ENCODE measurements at regions of chr16 and their contacts with region 1.

Region 1: DNA sequence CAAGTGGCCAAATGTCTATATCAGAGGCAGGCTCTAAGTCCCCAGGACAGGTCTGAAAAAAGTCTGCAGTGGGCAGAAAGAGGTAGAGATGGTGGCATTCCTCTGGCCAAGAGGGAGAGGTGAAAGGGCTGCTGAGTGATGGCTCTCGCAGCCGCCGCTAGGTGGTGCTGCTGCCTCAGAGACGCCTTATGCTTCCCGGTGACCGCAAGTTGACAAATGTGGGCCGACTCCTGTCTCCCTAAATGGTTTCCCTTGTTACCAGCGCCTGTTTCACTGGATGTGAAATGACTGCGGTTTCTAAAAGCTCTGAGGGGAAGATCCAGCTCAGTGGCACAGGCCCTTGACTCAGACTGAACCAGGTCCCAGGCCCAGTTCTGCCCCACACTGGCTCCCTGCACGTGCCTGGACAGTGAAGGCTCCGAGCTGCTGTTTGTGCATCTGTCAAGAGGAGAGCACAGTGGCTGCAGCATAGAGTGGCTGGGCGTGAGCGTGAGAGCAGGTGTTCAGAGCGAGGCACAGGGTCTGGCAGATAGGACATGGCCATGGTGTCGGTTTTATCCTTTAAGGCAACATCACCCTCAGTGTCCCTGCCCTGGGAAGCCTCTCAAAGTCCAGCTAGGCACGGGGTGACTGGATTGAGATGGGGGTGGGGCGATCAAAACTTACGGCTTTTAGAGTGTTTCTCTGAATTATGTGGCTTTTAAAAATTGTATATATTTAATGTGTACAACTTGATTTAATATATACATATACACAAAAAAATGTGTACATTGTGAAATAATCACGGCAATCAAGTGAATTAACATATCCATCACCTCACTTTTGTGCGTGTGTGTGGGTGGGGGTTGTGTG is 19.9 kb downstream of the CLEC16A start:
- DNase-seq: peak; percentile 89
- H3K4me3 Mint-ChIP-seq: peak overlapping the region; percentile 36
- H3K27ac Mint-ChIP-seq: peak overlapping the region; percentile 90
- H3K4me1 Mint-ChIP-seq: peaks cover 69% of the 10 kb centered on the region
- H3K27me3 Mint-ChIP-seq: no peaks in the 10 kb centered on the region

Region 2: DNA sequence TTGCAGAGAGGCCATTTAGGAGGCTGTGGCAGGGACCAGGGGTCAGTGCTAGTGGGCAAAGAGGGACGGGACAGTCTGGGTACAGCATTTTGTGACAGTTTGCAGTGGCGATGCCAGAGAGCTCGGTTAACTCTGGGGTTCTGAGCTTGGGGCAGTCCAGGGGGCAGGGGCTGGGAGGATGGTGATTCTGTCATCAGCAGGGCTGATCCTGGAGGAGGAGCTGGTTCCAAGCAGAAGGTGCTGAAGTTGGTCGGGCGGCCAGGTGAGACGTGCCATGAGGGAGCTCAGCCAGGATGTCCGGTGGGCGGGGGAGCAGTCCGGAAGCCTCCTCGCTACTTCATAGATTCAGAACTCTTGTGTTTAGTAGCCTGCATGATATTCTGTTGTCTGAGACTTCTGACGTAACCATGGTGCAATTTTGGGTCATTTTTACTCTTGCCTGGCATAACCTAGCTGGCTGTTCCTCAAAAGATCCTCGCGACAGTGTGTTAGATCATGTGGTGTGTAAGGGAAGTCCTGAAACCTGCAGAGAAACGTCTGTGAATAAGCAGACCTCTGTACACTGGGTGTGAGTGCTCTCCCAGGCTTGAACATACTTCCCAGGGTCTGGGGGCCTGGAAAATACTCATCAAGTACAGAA is 102.1 kb after region 1 on chr16:
- CTCF ChIA-PET with region 1: no interaction called
- DNase-seq: peak; percentile 33
- H3K4me3 Mint-ChIP-seq: no peak overlapping the region
- H3K27ac Mint-ChIP-seq: peak overlapping the region; percentile 17
- H3K4me1 Mint-ChIP-seq: peaks cover 43% of the 10 kb centered on the region
- H3K27me3 Mint-ChIP-seq: no peaks in the 10 kb centered on the region

Region 3: GRCh38 chr16:11094072-11094856 is 130.0 kb after region 1 on chr16:
- CTCF ChIA-PET with region 1: interaction called, 11 read pairs
- DNase-seq: peak; percentile 69
- H3K4me3 Mint-ChIP-seq: peak overlapping the region; percentile 9
- H3K27ac Mint-ChIP-seq: peak overlapping the region; percentile 92
- H3K4me1 Mint-ChIP-seq: peaks cover 80% of the 10 kb centered on the region
- H3K27me3 Mint-ChIP-seq: no peaks in the 10 kb centered on the region

Region 4: GRCh38 chr16:11356573-11357331 is 392.5 kb after region 1 on chr16:
- CTCF ChIA-PET with region 1: interaction called, 20 read pairs
- DNase-seq: peak; percentile 73
- H3K4me3 Mint-ChIP-seq: peak overlapping the region; percentile 62
- H3K27ac Mint-ChIP-seq: peak overlapping the region; percentile 96
- H3K4me1 Mint-ChIP-seq: peaks cover 91% of the 10 kb centered on the region
- H3K27me3 Mint-ChIP-seq: peaks cover 47% of the 10 kb centered on the region

Region 5: DNA sequence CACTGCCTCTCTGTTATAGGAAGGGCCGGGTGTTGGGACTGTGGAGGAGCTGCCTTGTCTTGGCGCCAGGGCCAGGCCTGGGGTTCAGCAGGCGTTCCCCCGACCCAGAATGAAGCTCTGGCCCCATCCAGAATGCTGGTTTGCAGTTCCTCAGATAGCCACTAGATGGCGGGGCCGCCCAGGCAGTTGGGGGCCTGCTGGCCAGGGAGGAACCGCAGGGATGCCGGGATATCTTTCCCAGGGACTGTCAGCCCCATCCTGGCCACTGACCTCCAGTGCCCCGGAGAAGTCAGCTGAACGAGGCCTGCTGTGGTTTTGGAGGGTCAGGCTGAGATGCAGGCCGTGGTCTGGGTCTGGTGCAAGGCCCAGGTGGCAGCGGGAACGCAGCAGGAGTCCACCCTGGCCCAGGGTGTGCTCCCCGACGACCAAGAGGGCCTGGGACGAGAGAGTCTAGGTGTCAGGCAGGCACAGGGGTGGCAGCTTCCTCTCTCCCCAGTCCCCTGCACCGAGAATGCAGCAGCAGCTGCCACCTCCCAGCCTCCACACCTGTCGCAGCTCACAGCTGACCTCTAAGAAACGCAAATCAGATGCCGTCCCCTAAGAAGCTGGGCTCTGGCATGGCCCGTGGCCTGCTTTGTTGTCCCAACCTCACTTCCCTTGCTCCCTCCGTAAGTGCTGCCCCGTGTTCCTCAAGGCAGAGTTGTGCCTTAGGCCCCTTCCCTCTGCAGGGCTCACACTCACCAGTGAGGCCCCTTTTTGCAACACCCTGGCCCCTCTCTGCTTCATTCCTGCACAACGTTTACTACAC is 432.2 kb after region 1 on chr16:
- CTCF ChIA-PET with region 1: interaction called, 13 read pairs
- DNase-seq: peak; percentile 76
- H3K4me3 Mint-ChIP-seq: no peak overlapping the region
- H3K27ac Mint-ChIP-seq: no peak overlapping the region
- H3K4me1 Mint-ChIP-seq: no peaks in the 10 kb centered on the region
- H3K27me3 Mint-ChIP-seq: peaks cover 48% of the 10 kb centered on the region

Region 6: DNA sequence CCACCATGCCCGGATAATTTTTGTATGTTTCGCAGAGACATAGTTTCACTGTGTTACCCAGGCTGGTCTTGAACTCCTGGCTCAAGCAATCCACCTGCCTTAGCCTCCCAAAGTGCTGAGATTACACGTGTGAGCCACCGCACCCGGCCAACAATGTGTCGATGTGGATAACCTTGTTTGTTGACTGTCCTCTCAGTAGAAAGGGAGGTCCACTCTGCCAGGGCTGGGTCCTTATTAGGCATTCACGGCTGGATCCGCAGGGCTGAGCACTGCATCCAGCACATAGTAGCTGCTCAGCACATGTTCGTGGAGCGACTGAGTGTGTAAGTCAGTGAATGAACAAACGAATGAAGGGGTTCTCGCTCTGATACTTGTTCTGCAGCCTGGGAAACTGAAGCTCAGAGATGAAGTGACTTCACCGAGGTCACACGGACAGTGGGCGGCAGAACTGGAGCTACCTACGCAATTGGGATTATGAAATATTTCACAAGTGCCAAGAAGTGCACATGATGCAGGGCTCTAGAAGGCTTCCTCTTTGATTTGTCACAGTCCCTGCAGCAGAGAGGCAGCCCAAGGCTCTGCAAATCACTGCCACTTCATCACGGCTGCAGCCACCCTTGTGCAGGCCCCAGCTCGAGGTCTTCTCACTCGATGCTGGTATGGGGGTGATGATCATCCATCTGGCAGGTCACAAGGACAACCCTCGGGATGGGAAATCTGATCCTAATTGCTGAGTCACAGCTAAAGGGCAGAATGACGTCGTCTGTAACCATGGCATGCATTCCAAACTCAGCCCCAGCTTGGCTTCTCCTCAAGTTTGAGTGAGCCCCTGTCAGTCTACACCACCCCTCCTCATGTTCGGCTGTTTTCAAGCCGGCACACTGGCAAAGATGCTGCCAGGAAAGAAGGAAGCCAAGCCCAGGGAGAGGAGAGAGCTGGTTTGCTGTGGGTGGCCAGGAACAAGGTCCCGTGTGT is 675.9 kb after region 1 on chr16:
- CTCF ChIA-PET with region 1: interaction called, 11 read pairs
- DNase-seq: no peak
- H3K4me3 Mint-ChIP-seq: no peak overlapping the region
- H3K27ac Mint-ChIP-seq: no peak overlapping the region
- H3K4me1 Mint-ChIP-seq: peaks cover 20% of the 10 kb centered on the region
- H3K27me3 Mint-ChIP-seq: peaks cover 43% of the 10 kb centered on the region

Measured in activated naive CD4-positive, alpha-beta T cell treated with anti-CD3 and anti-CD28 coated beads, Interleukin-2, amount 10 ng/mL, durations not matched to agents 7 days and 5 days (primary cell).